ENCODE measurements at regions of chr7 and their contacts with region 1.

Region 1: DNA sequence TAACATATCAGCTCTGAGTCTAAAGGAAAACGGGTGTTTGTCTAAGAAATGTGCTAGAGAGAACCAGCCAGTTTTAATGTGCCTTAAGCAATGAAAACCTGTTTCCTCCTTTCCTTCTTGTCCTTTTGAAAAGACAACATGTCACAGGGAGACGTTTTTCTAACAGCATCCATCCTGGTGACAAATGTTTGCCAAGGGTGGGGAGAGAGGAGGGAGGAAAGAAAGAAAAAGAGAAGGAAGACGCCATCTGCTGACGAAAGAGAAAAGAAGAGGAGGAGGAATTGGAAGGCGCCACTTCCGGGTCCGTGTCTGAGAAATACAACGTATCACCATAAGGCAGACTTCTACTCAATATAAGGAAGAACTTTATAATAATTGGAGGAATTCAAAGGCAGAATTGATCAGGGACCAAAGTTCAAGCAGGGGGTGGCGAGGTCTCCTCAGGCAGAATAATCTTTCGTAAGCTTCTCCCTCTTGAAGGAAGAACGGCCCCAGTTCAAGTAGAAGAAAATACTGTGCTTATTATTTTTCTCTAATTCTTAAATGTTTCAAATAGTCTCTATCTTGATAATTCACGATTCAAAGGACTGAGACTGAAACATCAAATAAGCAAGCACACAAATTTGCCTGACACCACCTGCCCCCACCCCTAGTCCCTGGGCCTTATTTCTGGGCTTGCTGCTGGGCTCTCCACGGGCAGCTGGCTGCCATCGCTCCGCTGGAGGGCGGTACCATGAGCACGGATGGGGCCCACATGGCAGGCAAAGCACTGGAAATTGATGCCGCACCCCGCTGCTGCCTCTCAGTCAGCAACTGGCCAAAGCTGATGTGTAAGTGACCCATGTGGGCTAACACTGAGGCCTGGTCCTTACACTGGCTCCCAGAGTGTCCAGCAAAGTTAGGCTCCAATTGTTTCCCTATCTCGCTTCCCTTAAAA is 273.7 kb upstream of the KLF14 start:
- DNase-seq: peak; percentile 40 to 86 (median 65)

Region 2: DNA sequence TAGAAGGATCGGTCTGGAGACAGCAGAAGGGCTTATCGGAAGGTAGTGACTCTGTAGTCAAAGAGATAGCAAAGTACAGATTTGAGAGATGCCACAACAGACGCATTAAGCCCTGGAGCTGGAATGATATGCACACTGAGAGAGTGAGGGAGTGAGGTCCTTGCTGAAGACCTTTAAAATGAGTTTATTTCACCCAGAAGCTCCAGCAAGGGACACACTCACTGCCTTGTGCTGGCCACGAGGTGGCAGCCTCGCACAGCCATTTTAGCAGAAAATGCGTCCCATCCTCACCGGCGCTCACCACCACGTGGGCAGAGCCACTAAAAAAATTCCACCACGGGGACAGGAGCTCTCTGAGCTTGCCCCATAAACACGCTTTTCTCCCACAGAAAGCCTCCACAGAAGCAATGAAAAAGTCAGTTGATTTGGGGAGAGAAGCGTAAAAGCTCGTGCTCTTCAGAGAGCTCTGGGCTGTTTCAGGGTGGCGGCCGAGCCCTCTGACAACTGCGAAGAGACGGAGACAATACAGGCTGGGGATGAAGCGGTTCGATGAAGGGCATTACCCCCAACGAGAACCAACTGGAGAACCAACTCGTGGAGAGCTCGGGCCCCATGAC is 110.7 kb before region 1 on chr7:
- intact Hi-C with region 1: loop called (anchors 5 kb)
- DNase-seq: peak; percentile 72 to 92 (median 84)

Region 3: DNA sequence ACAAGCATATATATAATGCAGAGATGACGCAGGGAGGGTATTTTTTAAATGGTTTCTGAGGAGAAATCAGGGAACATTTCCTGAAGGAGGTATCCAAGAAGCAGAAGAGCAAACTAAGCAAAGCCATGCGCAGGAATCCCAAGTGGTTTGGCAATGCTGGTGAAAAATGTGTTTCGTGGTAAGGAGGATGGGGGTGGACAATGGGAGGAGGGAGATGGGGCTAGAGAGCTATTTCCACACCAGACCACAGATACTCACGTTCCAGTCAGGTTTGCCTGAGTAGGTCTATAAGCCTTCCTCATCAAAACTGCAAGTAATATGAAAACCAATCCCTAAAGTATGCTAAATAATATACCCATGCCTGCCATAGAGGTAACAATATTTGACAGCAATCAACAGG is 96.3 kb after region 1 on chr7:
- intact Hi-C with region 1: no loop called
- DNase-seq: no peak

Region 4: DNA sequence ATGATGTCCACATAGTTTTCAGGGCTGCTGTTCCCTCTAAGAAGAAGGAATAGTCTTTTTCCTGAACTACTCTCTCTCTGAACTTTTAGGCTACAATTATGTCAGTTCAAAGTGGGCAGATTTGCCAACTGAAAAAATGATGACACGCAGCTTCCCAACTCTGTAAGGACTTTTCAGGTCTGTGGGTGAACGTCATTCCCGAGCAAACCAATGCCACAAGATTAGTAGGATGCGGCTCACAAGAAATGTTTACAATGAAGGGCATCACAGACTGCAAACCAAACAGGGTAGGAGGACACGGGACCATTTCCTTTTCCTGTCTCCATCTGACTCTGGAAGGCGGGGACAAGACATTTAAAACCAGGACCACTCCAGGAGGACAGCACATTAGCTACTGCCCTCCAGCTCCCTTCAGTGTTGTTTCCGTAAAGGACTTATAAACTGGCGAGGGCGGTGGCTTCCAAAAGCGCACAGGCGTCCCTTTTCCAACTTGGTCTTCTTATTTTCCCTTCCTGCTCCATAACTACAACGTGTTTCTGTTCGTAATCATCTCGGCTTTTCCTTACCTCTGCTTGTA is 319.5 kb after region 1 on chr7:
- intact Hi-C with region 1: no loop called
- DNase-seq: peak in 35 of 42 donors; percentile 4 to 64 (median 34)

Region 5: GRCh38 chr7:131383417-131384285 is 376.0 kb after region 1 on chr7:
- intact Hi-C with region 1: no loop called
- DNase-seq: no peak